GM13976 (cell line): ENCODE measurements at regions of chr14 and their contacts with region 1.

Region 1: GRCh38 chr14:90235179-90235976 is 21.0 kb upstream of the PSMC1 start:
- DNase-seq: peak; percentile 84
- CTCF ChIP-seq: peak; percentile 88

Region 2: GRCh38 chr14:89973234-89973823 is 262.0 kb before region 1 on chr14:
- in situ Hi-C with region 1: loop called (anchors 10 kb)
- DNase-seq: peak; percentile 61
- CTCF ChIP-seq: peak; percentile 69